ENCODE measurements at regions of chr9 and their contacts with region 1.

Region 1: DNA sequence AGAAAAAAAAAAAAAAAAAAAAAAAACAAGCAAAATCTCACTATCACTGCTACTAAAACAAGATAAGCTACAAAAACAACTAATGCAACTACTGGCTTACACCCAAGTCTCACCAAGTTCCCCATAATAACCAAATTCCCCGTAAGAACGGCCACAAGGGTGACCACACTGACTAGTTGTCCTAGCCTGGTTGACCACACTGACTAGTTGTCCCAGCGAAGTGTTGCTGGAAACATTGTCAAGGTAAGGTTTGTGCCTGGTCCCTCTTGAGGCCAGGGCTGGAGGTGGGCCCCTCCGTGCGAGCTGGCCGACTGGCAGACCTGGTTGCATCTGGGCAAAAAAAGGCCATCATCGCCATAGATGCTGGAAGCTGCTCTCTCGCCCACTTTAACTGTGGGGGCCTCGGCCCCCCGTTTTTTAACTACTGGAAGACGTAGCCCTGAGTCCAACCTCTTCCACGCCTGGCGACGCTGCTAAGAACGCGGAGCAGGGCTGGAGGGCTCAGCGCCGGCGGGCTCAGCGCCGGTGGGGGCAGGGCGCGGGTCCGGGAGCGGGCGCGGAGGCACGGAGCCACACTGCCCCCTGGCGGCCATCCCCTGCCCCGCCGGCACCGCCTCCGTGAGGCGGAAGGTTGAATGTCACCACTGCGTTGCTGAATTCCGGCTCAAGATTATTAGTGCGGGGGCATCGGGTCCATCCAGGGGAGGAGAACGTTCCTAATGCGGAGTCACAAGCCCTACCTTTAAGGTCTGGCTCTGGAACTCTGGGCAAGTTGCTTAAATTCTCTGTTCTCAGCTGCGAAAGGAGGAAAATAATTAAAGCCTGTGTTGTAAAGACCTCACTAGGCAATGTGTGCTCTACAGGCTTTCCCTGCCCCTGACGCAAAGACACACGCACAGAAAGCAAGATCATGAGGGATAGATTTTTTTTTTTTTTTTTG is 84.0 kb downstream of the HSD17B3 start:
- DNase-seq: peak; percentile 79
- H3K4me3 ChIP-seq: peak overlapping the region; percentile 4 to 46 (median 34)
- H3K27ac ChIP-seq: peak overlapping the region in 3 of 4 donors; percentile 57 to 73 (median 72)
- H3K4me1 ChIP-seq: peaks cover 0 to 20% (median 17%) of the 10 kb centered on the region in 4 donors
- H3K27me3 ChIP-seq: peaks cover 0 to 6% (median 0%) of the 10 kb centered on the region in 3 donors
- CTCF ChIP-seq: peak; percentile 79 to 100 (median 94)
- EP300 ChIP-seq: no peak
- POLR2A ChIP-seq: no peak

Region 2: GRCh38 chr9:95268681-95269080 is 949.3 kb before region 1 on chr9:
- intact Hi-C with region 1: loop called (anchors 2 kb)
- DNase-seq: no peak
- H3K4me3 ChIP-seq: no peak overlapping the region
- H3K27ac ChIP-seq: no peak overlapping the region
- H3K4me1 ChIP-seq: peaks cover 0 to 8% (median 6%) of the 10 kb centered on the region in 4 donors
- H3K27me3 ChIP-seq: no peaks in the 10 kb centered on the region
- CTCF ChIP-seq: peak in 1 of 4 experiments; percentile 19
- EP300 ChIP-seq: no peak
- POLR2A ChIP-seq: no peak

Region 3: DNA sequence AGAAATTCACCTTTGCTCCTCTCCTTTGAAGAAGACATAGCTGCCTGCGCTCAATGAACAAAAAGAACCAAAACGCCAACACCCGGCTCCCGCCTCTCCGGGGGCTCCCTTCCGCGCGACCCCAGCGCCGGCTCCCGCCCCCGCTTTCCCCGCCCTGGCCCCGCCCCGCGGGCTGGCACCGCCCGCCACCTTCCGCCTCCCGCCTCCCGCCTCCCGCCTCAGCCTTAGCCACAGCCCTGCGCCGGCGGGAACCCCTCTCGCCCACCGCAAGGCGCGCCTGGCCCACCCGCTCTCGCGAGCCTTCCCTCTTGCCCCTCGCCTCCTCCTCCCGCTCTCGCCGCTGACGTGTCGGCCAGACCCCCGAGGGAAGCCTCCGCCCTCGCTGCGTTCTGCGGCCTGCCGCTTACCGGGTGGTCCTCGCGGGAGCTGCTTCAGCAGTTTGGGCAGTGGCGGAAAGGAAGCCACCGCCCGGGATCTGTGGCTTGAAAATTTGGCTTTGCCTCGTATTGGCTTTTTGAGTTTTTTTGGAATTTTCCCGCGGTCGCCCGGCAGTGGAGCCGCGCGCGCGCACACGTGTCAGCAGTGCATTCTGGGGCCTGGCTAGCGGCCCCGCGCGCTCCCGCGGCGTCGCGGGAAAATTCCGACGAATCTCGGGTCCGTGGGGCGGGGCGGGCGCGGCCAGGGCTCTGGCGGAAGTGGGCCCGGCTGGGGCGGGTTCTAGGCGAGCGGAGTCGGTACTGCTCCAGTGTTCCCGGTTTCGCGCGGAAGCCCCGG is 900.7 kb before region 1 on chr9 and contains the start of gene FANCC:
- intact Hi-C with region 1: loop called (anchors 5 kb)
- DNase-seq: peak; percentile 95
- H3K4me3 ChIP-seq: peak within 1 kb of the TSS; percentile 76 to 99 (median 79)
- H3K27ac ChIP-seq: peak within 1 kb of the TSS; percentile 91 to 99 (median 94)
- H3K4me1 ChIP-seq: peaks cover 0 to 13% (median 5%) of the 10 kb centered on the region in 4 donors
- H3K27me3 ChIP-seq: no peaks in the 10 kb centered on the region
- CTCF ChIP-seq: no peak
- EP300 ChIP-seq: peak in 1 of 4 donors; percentile 42
- POLR2A ChIP-seq: no peak
- total RNA-seq, gene FANCC: 3.9 to 10.6 (median 5.3) TPM

Region 4: GRCh38 chr9:95510709-95511615 is 707.1 kb before region 1 on chr9:
- intact Hi-C with region 1: loop called (anchors 5 kb)
- DNase-seq: peak; percentile 96
- H3K4me3 ChIP-seq: peak overlapping the region; percentile 58 to 86 (median 76)
- H3K27ac ChIP-seq: peak overlapping the region; percentile 88 to 96 (median 93)
- H3K4me1 ChIP-seq: peaks cover 0 to 30% (median 16%) of the 10 kb centered on the region in 4 donors
- H3K27me3 ChIP-seq: peaks cover 0 to 6% (median 0%) of the 10 kb centered on the region in 3 donors
- CTCF ChIP-seq: no peak
- EP300 ChIP-seq: no peak
- POLR2A ChIP-seq: no peak

Region 5: DNA sequence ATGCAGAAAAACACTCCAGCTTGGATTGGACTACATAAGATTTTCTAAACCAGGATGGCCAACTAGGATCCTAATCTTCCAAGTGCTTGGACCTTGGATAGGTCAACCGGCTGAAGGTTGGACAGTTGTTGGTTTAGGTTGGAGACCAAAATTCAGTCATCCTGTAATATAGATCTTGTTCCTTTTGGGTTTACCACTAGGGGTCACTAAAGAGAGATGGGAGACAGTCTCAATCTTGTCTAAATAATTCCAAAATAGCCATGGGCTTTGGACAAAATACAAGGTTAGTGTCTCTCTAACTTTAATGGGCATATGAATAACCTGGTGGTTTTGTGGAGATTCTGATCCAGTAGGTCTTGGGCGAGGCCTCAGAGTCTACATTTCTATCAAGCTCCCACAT is 491.3 kb before region 1 on chr9:
- intact Hi-C with region 1: loop called (anchors 2 kb)
- DNase-seq: no peak
- H3K4me3 ChIP-seq: no peak overlapping the region
- H3K27ac ChIP-seq: no peak overlapping the region
- H3K4me1 ChIP-seq: peaks cover 0 to 6% (median 2%) of the 10 kb centered on the region in 4 donors
- H3K27me3 ChIP-seq: no peaks in the 10 kb centered on the region
- CTCF ChIP-seq: peak; percentile 28 to 62 (median 52)
- EP300 ChIP-seq: no peak
- POLR2A ChIP-seq: no peak

Region 6: DNA sequence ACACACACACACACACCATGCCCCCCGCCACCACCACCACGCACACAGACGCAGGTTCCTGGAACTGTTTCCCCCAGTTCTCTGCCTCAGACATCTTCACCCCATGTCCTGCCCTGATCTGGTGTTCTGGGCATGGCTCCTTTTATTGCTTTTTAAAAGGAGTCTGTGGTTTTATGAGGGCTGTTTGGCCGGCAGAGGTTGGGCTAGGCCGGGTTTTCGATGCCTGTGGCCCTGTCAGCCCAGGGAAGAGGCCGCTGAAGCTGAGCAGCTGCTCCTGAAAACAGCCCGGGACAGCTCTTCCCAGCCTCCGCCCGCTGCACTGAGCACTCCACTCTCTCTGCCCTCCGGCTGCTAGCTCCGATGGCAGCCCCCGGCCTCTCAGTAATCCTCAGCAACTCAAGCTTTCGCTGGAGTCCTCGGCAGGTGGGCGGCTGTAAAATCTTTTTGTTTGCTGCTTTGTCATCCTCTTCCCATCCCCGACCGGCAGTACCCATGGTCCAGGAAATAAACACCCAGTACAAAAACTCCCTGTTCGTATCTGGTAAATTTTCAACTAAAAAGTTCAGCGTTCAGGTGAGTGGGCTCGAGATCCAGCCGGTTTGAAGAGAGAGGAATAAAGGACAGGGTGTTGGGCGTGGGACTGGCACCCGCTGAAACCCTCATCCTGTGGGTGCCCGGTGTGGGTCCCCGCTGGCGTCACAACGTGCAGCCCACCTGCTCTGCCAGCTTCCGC is 445.5 kb before region 1 on chr9:
- intact Hi-C with region 1: loop called (anchors 5 kb)
- DNase-seq: peak; percentile 93
- H3K4me3 ChIP-seq: peak overlapping the region; percentile 11 to 25 (median 21)
- H3K27ac ChIP-seq: peak overlapping the region; percentile 70 to 85 (median 84)
- H3K4me1 ChIP-seq: peaks cover 0 to 39% (median 26%) of the 10 kb centered on the region in 4 donors
- H3K27me3 ChIP-seq: no peaks in the 10 kb centered on the region
- CTCF ChIP-seq: no peak
- EP300 ChIP-seq: peak in 3 of 4 donors; percentile 39 to 72 (median 52)
- POLR2A ChIP-seq: no peak

Region 7: GRCh38 chr9:96048104-96048955 is 169.7 kb before region 1 on chr9:
- intact Hi-C with region 1: loop called (anchors 2 kb)
- DNase-seq: no peak
- H3K4me3 ChIP-seq: peak overlapping the region in 2 of 4 donors; percentile 2 to 10
- H3K27ac ChIP-seq: peak overlapping the region; percentile 42 to 65 (median 62)
- H3K4me1 ChIP-seq: peaks cover 0 to 17% (median 12%) of the 10 kb centered on the region in 4 donors
- H3K27me3 ChIP-seq: no peaks in the 10 kb centered on the region
- CTCF ChIP-seq: no peak
- EP300 ChIP-seq: no peak
- POLR2A ChIP-seq: no peak